ENCODE measurements at regions of chr2 and their contacts with region 1.

Region 1: DNA sequence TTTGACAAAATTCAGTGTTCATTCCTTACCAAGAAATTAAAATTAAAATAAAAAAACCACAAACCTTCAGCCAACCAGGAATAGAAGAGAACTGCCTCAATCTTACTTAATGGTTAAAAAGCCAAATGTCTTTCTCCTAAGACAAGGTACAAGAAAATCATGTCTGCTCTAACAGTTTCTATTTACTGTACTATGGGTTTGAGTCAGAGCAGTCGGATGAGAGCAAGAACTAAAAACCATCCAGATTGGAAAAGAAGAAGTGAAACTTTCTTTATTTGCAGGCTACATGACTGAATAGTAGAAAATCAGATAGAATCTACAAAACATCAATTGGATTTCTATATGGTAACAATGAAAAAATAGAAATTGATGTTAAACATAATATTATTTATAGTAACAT is 555.5 kb upstream of the TNP1 start:
- DNase-seq: no peak
- H3K4me3 ChIP-seq: no peak overlapping the region
- H3K27ac ChIP-seq: no peak overlapping the region
- H3K4me1 ChIP-seq: no peaks in the 10 kb centered on the region
- H3K27me3 ChIP-seq: no peaks in the 10 kb centered on the region
- CTCF ChIP-seq: no peak
- POLR2A ChIP-seq: no peak

Region 2: GRCh38 chr2:217277646-217278398 is 137.5 kb before region 1 on chr2:
- intact Hi-C with region 1: no loop called
- DNase-seq: no peak
- H3K4me3 ChIP-seq: no peak overlapping the region
- H3K27ac ChIP-seq: no peak overlapping the region
- H3K4me1 ChIP-seq: no peaks in the 10 kb centered on the region
- H3K27me3 ChIP-seq: no peaks in the 10 kb centered on the region
- CTCF ChIP-seq: no peak
- POLR2A ChIP-seq: no peak

Region 3: GRCh38 chr2:217360781-217361482 is 54.4 kb before region 1 on chr2:
- intact Hi-C with region 1: loop called (anchors 2 kb)
- DNase-seq: peak; percentile 21
- H3K4me3 ChIP-seq: no peak overlapping the region
- H3K27ac ChIP-seq: peak overlapping the region; percentile 29 to 56
- H3K4me1 ChIP-seq: peaks cover 3% of the 10 kb centered on the region
- H3K27me3 ChIP-seq: no peaks in the 10 kb centered on the region
- CTCF ChIP-seq: no peak
- POLR2A ChIP-seq: no peak

Measured in prostate gland (tissue), 2 donors.